Left colon (tissue), 2 donors: ENCODE measurements at regions of chr1 and their contacts with region 1.

Region 1: GRCh38 chr1:180935326-180936109 is 22.8 kb downstream of the KIAA1614 start:
- DNase-seq: peak; percentile 63 to 67
- ATAC-seq: peak; percentile 99

Region 2: DNA sequence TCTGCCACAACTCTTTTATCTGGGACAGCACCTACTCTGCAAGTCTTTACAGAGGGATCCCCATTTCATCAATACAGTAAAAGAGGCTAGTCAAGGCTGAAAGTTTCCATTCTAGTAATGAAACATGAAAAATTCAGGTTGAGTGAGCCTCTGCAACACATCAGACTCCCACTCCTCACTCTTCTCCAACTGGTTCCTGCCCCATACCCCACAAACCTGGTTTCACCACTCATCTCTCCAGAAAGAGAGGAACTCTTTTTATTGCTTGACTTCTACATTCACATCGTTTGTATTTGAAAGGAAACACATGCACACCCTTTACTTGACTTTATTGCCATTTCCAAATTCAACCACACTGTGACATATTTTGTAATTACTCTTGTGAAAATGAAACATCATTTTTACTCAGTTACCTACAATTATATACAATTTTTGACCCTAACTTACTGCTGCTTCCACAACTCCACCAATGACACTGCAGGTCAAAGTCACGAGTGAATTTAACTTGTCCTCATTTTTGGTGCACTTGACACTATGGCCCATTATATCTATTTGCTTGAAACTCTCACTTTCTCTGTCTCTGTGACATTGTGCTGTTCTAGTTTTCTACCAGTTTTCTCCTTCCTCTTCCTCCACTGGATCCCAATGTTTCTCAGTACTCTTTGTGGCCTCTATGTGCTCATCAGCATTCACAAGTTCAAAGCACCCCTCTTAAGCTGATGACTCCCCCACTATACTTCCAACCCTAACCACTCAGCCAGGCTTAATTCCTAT is 79.1 kb after region 1 on chr1:
- intact Hi-C with region 1: loop called in 1 of 2 experiments (anchors 10 kb)
- DNase-seq: no peak
- ATAC-seq: no peak

Region 3: DNA sequence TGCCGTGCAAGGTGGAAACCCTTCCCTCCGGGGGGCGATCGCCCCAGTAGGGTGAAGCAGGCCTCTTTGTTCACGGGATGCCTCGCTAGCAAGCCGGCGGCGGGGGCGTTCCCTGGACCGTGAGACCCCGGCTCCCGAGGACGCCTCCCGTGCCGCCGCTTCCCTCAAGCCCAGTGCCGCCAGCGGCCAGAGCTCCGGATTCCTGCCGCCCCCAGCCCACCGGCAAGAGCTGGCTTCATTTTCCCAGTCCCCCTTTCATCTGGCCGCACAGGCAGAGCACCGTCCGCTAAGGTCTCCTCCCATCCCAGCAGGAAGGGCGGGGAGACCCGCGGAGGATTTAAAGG is 169.2 kb after region 1 on chr1:
- intact Hi-C with region 1: no loop called
- DNase-seq: peak in 1 of 2 donors; percentile 71
- ATAC-seq: no peak